Dorsolateral prefrontal cortex (tissue), 120 donors: ENCODE measurements at regions of chr1 and their contacts with region 1.

Region 1: DNA sequence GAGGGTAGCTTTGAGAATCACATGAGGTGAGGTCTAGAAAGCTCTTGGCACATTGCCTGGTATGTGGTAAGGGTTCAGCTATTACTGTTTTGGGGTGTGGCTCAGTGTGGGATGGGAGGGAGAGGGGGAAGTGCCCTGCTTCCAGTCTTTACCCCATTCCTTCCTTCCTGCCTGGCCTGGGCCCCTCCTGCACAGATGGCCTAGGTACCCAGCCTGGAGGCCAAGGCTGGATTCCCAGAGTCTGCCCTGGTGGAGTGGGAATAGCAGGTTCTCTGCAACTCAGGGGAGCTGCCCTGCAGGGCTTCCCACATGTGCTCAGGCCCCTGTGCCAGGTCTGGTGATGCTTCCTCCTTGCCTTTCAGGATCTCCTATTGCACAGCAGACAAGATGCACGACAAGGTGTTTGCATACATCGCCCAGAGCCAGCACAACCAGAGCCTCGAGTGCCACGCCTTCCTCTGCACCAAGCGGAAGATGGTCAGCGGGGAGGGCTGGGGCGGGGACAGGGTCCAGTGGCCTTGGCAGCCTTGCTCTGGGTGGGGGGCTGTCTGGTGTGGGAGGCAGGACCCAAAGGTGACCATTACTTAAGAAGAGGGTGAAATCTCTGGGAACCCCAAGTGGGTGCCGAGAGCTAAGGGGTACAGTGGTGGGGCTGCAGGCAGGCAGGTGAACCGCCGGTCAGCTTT is 13.5 kb downstream of the LDLRAP1 start:
- DNase-seq: peak in 1 of 10 donors; percentile 75
- H3K4me3 ChIP-seq: no peak overlapping the region
- H3K27ac ChIP-seq: peak overlapping the region in 51 of 59 donors; percentile 29 to 99 (median 98)
- H3K27me3 ChIP-seq: no peaks in the 10 kb centered on the region
- CTCF ChIP-seq: no peak

Region 2: DNA sequence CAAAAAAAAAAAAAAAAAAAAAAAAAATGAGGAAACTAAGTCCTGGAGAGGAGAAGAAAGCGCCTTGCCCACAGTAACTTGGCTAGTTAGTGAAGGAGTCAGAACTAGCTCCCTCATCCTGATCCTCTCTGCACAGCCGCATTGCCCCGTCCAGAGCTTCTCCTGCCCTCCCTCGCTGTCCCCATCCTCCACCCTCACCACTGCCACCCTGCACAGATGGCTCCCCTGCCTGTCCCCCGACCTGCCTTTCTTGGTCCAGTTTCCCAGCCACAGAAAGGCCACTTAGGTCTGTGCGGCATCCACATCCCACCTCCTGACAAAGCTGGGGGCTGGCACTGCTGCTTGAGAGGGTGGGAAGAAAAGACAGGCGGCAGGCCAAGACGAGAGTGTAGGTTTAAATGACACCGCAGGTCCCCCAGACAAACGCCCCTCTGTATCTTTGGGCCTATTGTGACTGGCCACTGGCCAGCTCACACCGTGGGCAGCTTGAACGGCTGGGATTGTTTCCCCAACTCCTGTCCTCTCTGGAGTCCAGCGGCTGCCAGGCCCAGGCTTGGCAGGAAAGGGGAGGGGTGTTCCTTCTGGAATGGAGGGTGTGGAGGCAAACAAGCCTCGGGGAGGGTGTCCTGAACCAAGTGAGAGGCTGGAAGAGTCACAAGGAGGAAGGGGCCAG is 980.9 kb before region 1 on chr1:
- intact Hi-C with region 1: no loop called
- DNase-seq: peak in 2 of 10 donors; percentile 14 to 47
- H3K4me3 ChIP-seq: no peak overlapping the region
- H3K27ac ChIP-seq: peak overlapping the region in 6 of 59 donors; percentile 8 to 43 (median 21)
- H3K27me3 ChIP-seq: no peaks in the 10 kb centered on the region
- CTCF ChIP-seq: no peak

Region 3: DNA sequence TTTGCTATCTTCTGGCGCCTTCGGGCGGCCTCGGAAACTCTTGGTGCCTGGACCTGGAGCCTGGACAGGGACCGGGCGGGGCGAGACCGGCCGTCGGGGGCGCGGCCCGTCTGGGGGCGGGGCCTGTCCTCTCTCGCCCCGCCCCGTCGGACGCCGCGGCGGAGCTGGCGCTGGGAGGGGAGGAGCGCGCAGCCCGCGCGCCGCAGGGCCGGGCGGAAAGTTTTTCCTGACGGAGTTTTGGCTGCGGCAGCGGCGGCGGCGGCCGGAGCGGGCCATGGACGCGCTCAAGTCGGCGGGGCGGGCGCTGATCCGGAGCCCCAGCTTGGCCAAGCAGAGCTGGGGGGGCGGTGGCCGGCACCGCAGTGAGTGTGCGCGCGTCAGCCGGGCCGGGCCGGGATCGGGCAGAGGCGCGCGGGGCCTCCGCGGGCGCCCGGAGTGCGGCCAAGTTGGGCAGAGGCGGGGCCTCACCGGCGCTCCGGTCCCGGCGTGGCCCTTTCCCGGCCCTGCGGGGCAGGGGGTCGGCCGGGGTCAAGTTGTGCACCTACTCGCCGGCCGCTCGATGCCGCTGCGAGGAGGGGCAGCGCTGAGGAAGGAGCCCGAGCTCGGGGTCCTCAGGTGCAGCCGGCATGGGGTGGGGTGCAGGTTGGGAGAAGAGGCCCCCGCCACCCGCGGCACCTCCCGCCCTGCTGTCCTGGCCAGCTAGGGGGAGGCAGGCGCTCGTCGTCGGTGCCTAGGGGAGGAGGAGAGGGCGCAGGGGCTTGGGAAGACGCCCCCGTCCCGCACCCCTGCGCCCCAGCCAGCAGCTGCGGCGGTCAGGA is 13.3 kb before region 1 on chr1 and contains the start of gene LDLRAP1:
- intact Hi-C with region 1: loop called in 1 of 2 experiments (anchors 2 kb)
- DNase-seq: peak; percentile 38 to 88 (median 67)
- H3K4me3 ChIP-seq: peak within 1 kb of the TSS; percentile 40 to 96 (median 85)
- H3K27ac ChIP-seq: peak within 1 kb of the TSS in 58 of 59 donors; percentile 45 to 99 (median 81)
- H3K27me3 ChIP-seq: no peaks in the 10 kb centered on the region
- CTCF ChIP-seq: peak in 12 of 56 donors; percentile 7 to 39 (median 18)
- total RNA-seq, gene LDLRAP1: 6.1 to 62.3 (median 19.3) TPM

Region 4: GRCh38 chr1:25796811-25797458 is 240.0 kb after region 1 on chr1:
- intact Hi-C with region 1: loop called in 1 of 2 experiments (anchors 5 kb)
- DNase-seq: peak; percentile 70 to 93 (median 83)
- H3K4me3 ChIP-seq: peak overlapping the region in 3 of 59 donors; percentile 2 to 17 (median 5)
- H3K27ac ChIP-seq: peak overlapping the region in 40 of 59 donors; percentile 0 to 95 (median 46)
- H3K27me3 ChIP-seq: no peaks in the 10 kb centered on the region
- CTCF ChIP-seq: peak; percentile 44 to 88 (median 73)

Region 5: GRCh38 chr1:26555550-26556510 is 998.9 kb after region 1 on chr1:
- intact Hi-C with region 1: no loop called
- DNase-seq: peak; percentile 40 to 97 (median 93)
- H3K4me3 ChIP-seq: no peak overlapping the region
- H3K27ac ChIP-seq: peak overlapping the region; percentile 65 to 100 (median 97)
- H3K27me3 ChIP-seq: no peaks in the 10 kb centered on the region
- CTCF ChIP-seq: peak in 10 of 56 donors; percentile 11 to 34 (median 24)